GM12878 (cell line): ENCODE measurements at regions of chr7 and their contacts with region 1.

Region 1: DNA sequence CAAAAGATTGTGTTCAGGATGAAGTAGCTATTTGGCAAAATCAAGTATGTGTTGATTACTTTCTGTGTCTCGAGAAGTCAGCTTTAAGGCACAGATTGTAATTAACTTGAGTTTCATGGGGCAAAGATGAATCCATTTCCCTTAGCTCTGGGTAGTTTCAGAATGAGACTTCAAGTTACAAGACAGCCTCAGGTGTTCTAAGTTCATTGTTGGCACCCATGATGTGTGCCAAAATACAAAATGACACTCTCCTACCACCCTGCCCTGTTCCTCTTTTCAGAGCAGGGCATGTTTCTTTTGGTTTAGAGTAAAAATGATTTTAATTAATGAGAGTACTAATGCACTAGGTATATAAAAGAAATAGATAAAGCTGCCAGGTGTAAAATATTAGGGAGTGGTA is 797.6 kb upstream of the POT1 start:
- DNase-seq: peak; percentile 0
- ATAC-seq: peak; percentile 94
- H3K4me3 ChIP-seq: no peak overlapping the region
- H3K27ac ChIP-seq: no peak overlapping the region
- H3K4me1 ChIP-seq: no peaks in the 10 kb centered on the region
- H3K27me3 ChIP-seq: no peaks in the 10 kb centered on the region
- CTCF ChIP-seq: no peak
- EP300 ChIP-seq: no peak
- POLR2A ChIP-seq: no peak
- RAD21 ChIP-seq: no peak

Region 2: GRCh38 chr7:125695626-125696025 is 31.6 kb before region 1 on chr7:
- CTCF ChIA-PET with region 1: no interaction called
- POLR2A ChIA-PET with region 1: no interaction called
- RAD21 ChIA-PET with region 1: no interaction called
- SMC1A ChIA-PET with region 1: no interaction called
- in situ Hi-C with region 1: no loop called
- intact Hi-C with region 1: loop called (anchors 1 kb)
- DNase-seq: no peak
- ATAC-seq: no peak
- H3K4me3 ChIP-seq: no peak overlapping the region
- H3K27ac ChIP-seq: no peak overlapping the region
- H3K4me1 ChIP-seq: no peaks in the 10 kb centered on the region
- H3K27me3 ChIP-seq: no peaks in the 10 kb centered on the region
- CTCF ChIP-seq: no peak
- EP300 ChIP-seq: no peak
- POLR2A ChIP-seq: no peak
- RAD21 ChIP-seq: no peak

Region 3: DNA sequence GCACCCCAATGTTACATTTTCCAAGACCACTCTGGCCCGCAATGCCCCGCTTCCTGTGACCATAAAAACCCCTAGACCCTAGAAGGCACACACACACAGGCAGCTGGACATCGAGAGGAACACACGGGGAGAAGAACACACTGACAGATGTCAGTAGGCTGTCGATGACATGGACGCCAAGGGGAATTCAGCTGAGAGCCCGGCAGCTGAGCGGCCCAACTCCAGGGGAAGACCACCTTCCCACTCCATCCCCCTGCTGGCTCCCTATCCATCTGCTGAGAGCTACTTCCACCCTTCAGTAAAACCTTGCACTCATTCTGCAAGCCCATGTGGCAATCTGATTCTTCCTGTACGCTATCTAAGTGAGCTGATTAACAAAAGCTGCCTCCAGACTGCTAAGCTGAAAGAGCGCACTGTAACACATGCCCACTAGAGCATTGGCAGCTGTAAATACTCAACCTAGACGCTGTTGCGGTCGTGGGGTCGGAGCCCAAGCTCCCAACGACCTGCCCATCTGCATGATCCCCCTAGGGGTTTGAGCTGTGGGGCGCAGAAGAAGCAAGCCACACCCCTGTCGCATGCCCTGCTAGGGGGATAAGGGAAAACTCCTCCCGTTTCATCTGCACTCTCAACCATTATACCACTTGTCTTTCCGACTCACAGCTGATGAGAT is 46.0 kb after region 1 on chr7:
- CTCF ChIA-PET with region 1: no interaction called
- POLR2A ChIA-PET with region 1: no interaction called
- RAD21 ChIA-PET with region 1: no interaction called
- SMC1A ChIA-PET with region 1: no interaction called
- in situ Hi-C with region 1: no loop called
- intact Hi-C with region 1: no loop called
- DNase-seq: no peak
- ATAC-seq: peak; percentile 43
- H3K4me3 ChIP-seq: no peak overlapping the region
- H3K27ac ChIP-seq: no peak overlapping the region
- H3K4me1 ChIP-seq: no peaks in the 10 kb centered on the region
- H3K27me3 ChIP-seq: no peaks in the 10 kb centered on the region
- CTCF ChIP-seq: no peak
- EP300 ChIP-seq: no peak
- POLR2A ChIP-seq: no peak
- RAD21 ChIP-seq: no peak